Activated CD4-positive, alpha-beta T cell treated with anti-CD3 and anti-CD28 coated beads, Interleukin-2, amount 10 ng/mL, durations not matched to agents 24 days and 14 days (primary cell): ENCODE measurements at regions of chr22 and their contacts with region 1.

Region 1: GRCh38 chr22:28772633-28773460 is at the start of gene CCDC117:
- DNase-seq: peak; percentile 98
- H3K4me3 Mint-ChIP-seq: peak within 1 kb of the TSS; percentile 89
- H3K27ac Mint-ChIP-seq: peak within 1 kb of the TSS; percentile 96
- H3K4me1 Mint-ChIP-seq: peaks cover 22% of the 10 kb centered on the region
- H3K27me3 Mint-ChIP-seq: peaks cover 4% of the 10 kb centered on the region
- total RNA-seq, gene CCDC117: 41.2 and 47.7 TPM in 2 replicates

Region 2: GRCh38 chr22:27336151-27337090 is 1436.4 kb before region 1 on chr22:
- intact Hi-C with region 1: no loop called
- DNase-seq: no peak
- H3K4me3 Mint-ChIP-seq: no peak overlapping the region
- H3K27ac Mint-ChIP-seq: no peak overlapping the region
- H3K4me1 Mint-ChIP-seq: no peaks in the 10 kb centered on the region
- H3K27me3 Mint-ChIP-seq: peaks cover 6% of the 10 kb centered on the region

Region 3: DNA sequence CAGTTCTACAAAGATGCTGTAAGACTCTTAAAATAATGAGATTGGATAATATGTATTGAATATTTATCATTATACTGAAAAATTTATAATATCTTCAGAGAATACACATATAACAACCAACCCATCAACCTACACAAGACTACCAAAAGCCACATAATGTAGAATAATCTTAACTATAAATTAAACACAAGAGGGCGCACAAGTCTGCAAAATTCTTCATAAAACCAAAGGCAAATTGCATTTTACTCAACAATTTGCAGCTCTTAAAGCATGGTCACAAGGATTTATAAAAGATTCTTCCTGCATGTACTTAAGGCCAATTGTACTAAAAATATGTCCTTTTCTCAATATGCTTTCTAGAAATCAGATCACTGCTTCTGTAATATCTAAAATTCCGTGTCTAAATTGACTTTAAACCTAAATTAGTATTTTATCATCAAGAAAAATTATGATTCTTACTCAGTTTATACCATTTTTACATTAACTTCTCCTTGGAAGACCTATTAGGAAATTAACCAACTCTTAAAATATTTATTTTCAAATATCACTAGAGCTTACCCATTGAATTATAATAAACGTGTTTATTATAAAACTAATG is 172.2 kb before region 1 on chr22:
- intact Hi-C with region 1: loop called (anchors 5 kb)
- DNase-seq: peak; percentile 74
- H3K4me3 Mint-ChIP-seq: no peak overlapping the region
- H3K27ac Mint-ChIP-seq: no peak overlapping the region
- H3K4me1 Mint-ChIP-seq: no peaks in the 10 kb centered on the region
- H3K27me3 Mint-ChIP-seq: peaks cover 36% of the 10 kb centered on the region

Region 4: DNA sequence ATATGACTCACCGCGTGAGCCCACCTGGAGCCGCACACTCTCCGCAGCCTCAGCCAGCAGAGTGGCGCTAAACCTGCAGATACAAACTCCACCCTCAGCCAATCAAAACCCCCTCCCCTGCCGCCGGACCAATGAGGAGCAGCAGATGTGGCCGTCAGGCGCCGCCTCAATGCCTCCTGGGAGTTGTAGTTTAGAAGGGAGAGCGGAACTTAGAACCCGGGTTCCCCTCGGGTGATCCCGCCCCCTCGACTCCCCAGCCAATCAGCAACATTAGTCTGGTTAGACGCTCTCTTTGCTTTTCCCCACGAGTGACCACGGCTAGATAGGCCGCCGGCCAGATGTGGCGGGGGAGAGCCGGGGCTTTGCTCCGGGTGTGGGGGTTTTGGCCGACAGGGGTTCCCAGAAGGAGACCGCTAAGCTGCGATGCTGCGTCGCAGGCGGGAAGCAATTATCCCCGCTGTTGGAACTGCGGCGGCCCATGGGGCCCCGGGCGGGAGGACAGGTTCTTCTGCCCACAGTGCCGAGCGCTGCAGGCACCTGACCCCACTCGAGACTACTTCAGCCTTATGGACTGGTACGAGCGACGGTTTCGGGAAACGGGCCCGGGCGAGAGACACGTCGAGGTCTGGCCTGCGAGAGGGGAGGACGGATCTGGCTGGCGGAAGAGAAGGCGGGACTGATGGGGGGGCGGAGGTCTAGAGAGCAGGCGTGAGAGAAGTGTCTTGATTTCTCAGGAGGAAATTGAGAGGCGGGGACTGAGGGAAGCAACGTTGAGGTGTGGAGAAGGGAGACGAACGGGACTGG is 30.9 kb before region 1 on chr22 and contains the starts of genes CHEK2 and HSCB:
- intact Hi-C with region 1: loop called (anchors 1 kb)
- DNase-seq: peak; percentile 99
- H3K4me3 Mint-ChIP-seq: peak within 1 kb of the TSS; percentile 92
- H3K27ac Mint-ChIP-seq: peak within 1 kb of the TSS; percentile 86
- H3K4me1 Mint-ChIP-seq: peaks cover 25% of the 10 kb centered on the region
- H3K27me3 Mint-ChIP-seq: no peaks in the 10 kb centered on the region
- total RNA-seq, gene CHEK2: 29.8 and 32.7 TPM in 2 replicates
- total RNA-seq, gene HSCB: 12.8 and 14.1 TPM in 2 replicates

Region 5: DNA sequence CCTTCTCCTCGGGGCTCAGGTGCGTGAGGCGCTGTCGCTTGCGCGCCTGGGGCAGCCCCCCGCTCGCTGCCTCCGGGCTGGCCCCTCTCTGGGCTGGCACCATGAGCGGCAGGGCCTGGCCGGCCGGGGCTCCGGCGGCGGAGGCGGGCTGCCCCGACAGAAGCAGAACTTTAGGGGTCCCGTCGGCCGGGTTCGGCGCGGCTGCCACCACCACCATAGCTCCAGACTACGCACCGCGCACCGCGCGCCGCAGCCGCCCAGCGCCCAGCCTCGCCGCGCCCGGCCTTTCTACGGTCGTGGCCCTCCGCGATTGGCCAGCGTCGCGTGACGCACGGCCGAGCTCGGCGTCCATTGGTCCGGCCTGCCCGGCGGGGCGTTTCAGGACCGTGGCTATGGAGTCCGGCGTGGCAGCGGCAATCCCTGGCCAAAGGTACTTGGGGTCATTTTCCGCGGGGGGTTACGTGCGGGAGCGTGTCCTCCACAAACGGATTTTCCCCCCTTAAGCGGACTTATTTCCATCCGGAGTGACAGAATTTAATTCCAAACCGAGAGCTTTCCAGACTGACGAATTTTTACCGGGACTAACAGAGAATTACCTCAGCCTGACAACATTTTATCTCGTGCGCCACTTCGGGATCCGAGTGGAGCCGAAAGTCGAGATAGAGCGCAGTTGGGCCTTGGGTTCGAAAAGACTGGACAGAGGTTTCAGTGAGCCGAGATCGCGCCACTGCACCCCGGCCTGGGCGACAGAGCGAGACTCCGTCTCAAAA is 27.6 kb after region 1 on chr22 and contains the start of gene XBP1:
- intact Hi-C with region 1: loop called (anchors 1 kb)
- DNase-seq: peak; percentile 98
- H3K4me3 Mint-ChIP-seq: peak within 1 kb of the TSS; percentile 89
- H3K27ac Mint-ChIP-seq: peak within 1 kb of the TSS; percentile 95
- H3K4me1 Mint-ChIP-seq: peaks cover 41% of the 10 kb centered on the region
- H3K27me3 Mint-ChIP-seq: no peaks in the 10 kb centered on the region
- total RNA-seq, gene XBP1: 133 and 135 TPM in 2 replicates

Region 6: GRCh38 chr22:28810821-28811491 is 38.1 kb after region 1 on chr22:
- intact Hi-C with region 1: loop called (anchors 5 kb)
- DNase-seq: peak; percentile 89
- H3K4me3 Mint-ChIP-seq: peak overlapping the region; percentile 73
- H3K27ac Mint-ChIP-seq: peak overlapping the region; percentile 89
- H3K4me1 Mint-ChIP-seq: peaks cover 76% of the 10 kb centered on the region
- H3K27me3 Mint-ChIP-seq: no peaks in the 10 kb centered on the region

Region 7: DNA sequence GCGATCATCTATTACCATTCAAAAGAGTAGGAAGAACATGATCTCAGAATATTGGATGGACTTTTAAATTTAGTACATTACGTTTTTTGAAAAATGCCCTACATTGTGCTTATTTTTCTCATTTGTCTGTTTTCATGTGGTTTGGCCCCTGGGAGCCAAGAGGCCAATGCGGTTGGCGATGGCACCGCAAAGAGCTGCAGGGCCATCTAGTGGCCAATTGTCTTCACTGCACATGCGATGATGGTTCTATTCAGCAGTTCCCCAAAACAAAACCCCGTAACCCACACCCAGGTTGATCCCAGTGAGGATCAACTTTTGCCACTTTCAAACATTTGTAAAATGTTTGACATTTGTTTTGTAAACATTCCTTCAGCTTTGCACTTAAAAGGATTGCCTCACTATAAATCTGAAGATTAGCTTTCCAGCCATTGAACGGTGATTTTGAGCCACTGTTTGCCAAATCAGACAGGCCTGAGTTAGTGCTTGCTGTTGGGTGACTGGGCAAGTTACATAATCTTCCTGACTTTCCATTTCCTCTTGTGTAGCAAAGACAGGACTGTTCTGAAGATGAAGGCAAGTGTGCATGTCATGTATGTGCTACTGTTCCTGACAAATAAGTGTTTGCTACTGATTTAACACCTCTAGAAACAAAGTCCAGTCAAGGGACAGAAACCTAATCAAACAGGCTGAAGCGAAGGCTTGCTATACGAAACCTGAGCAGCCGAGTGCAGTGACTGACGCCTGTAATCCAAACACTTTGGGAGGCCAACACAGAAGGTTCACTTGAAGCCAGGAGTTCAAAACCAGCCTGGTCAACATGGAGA is 56.7 kb after region 1 on chr22:
- intact Hi-C with region 1: loop called (anchors 1 kb)
- DNase-seq: peak; percentile 93
- H3K4me3 Mint-ChIP-seq: peak overlapping the region; percentile 34
- H3K27ac Mint-ChIP-seq: no peak overlapping the region
- H3K4me1 Mint-ChIP-seq: peaks cover 23% of the 10 kb centered on the region
- H3K27me3 Mint-ChIP-seq: no peaks in the 10 kb centered on the region